Tibial artery (tissue), 4 donors: ENCODE measurements at regions of chr16 and their contacts with region 1.

Region 1: GRCh38 chr16:57619832-57620636 is 8.4 kb upstream of the ADGRG1 start:
- DNase-seq: peak in 1 of 2 donors; percentile 59
- H3K4me3 ChIP-seq: no peak overlapping the region
- H3K27ac ChIP-seq: no peak overlapping the region
- H3K4me1 ChIP-seq: peaks cover 0 to 27% (median 0%) of the 10 kb centered on the region in 4 donors
- H3K27me3 ChIP-seq: peaks cover 0 to 12% of the 10 kb centered on the region in 2 donors
- CTCF ChIP-seq: no peak

Region 2: DNA sequence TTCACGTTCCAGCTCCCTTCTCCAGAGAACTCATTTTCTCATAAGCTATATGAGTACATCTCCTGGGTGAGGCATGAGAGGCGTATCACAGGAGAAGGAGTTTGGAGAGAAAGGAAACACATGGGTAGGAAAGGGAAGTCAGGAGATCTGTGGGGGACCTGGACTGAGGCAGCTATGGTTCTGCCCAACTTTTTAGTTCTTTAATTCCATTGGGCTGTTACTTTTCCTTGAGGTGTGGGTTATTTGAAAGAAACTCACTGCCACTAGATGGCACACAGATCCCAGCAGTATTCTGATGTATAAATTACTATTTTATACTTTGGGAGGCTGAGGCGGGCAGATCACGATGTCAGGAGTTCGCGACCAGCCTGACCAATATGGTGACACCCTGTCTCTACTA is 826.5 kb before region 1 on chr16:
- intact Hi-C with region 1: no loop called
- DNase-seq: no peak
- H3K4me3 ChIP-seq: no peak overlapping the region
- H3K27ac ChIP-seq: no peak overlapping the region
- H3K4me1 ChIP-seq: peaks cover 0 to 5% (median 0%) of the 10 kb centered on the region in 4 donors
- H3K27me3 ChIP-seq: no peaks in the 10 kb centered on the region
- CTCF ChIP-seq: no peak

Region 3: DNA sequence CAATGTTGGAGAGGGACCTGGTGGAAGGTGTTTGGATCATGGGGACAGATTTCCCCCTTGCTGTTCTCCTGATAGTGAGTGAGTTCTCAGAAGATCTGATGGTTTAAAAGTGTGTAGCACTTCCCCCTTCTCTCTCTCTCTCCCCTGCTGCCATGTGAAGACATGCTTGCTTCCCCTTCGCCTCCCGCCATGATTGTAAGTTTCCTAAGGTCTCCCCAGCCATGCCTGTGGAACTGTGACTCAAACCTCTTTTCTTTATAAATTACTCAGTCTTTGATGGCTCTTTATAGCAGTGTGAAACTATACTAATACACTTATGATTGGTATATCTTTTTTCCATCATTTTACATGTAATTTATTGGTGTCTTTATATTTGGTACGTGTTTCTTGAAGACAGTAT is 64.2 kb before region 1 on chr16:
- intact Hi-C with region 1: loop called (anchors 2 kb)
- DNase-seq: no peak
- H3K4me3 ChIP-seq: no peak overlapping the region
- H3K27ac ChIP-seq: no peak overlapping the region
- H3K4me1 ChIP-seq: no peaks in the 10 kb centered on the region
- H3K27me3 ChIP-seq: peaks cover 0 to 5% of the 10 kb centered on the region in 2 donors
- CTCF ChIP-seq: no peak

Region 4: GRCh38 chr16:57667526-57668258 is 47.7 kb after region 1 on chr16:
- intact Hi-C with region 1: no loop called
- DNase-seq: no peak
- H3K4me3 ChIP-seq: no peak overlapping the region
- H3K27ac ChIP-seq: no peak overlapping the region
- H3K4me1 ChIP-seq: no peaks in the 10 kb centered on the region
- H3K27me3 ChIP-seq: peaks cover 0 to 26% of the 10 kb centered on the region in 2 donors
- CTCF ChIP-seq: no peak